Caco-2 (cell line): ENCODE measurements at regions of chr2 and their contacts with region 1.

Region 1: GRCh38 chr2:120879431-120880295 is 144.0 kb downstream of the GLI2 start:
- DNase-seq: peak in 1 of 2 experiments; percentile 46
- H3K4me3 ChIP-seq: no peak overlapping the region
- H3K4me3 Mint-ChIP-seq: peak overlapping the region; percentile 67
- H3K27ac Mint-ChIP-seq: no peak overlapping the region
- H3K4me1 ChIP-seq: no peaks in the 10 kb centered on the region
- H3K4me1 Mint-ChIP-seq: no peaks in the 10 kb centered on the region
- H3K27me3 ChIP-seq: no peaks in the 10 kb centered on the region
- H3K27me3 Mint-ChIP-seq: no peaks in the 10 kb centered on the region
- CTCF ChIP-seq: peak; percentile 23 to 42

Region 2: DNA sequence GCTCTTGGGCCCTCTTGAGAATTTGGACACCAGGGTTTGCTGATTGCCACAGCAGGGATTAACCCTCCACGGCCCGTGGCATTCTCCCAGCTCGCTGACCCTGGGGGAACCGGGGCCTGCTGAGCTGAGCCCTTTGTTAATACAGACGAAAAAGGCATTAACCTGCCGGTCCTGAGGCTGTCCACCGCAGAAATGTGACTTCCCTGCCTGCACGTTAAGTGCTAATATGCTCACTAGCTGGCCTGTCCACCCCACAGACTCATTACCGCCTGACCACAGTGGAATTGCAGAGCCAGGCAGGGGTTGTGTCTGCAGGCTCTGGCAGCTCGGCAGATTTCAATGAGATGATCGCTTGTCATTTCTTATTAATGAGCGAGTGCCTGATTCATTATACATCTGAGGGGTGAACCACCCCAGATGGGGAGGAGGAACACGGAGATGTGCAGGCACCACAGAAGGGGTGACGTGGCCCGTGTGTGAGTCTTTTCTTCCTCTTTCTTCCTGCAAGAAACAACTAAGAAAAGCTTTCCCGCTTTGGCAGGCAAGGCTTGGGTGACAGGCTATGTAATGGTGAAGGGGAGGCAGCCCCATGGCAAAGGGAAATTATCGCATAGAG is 18.0 kb before region 1 on chr2:
- CTCF ChIA-PET with region 1: no interaction called
- POLR2A ChIA-PET with region 1: no interaction called
- intact Hi-C with region 1: loop called (anchors 2 kb)
- DNase-seq: no peak
- H3K4me3 ChIP-seq: no peak overlapping the region
- H3K4me3 Mint-ChIP-seq: no peak overlapping the region
- H3K27ac Mint-ChIP-seq: no peak overlapping the region
- H3K4me1 ChIP-seq: peaks cover 9% of the 10 kb centered on the region
- H3K4me1 Mint-ChIP-seq: peaks cover 6% of the 10 kb centered on the region
- H3K27me3 ChIP-seq: no peaks in the 10 kb centered on the region
- H3K27me3 Mint-ChIP-seq: no peaks in the 10 kb centered on the region
- CTCF ChIP-seq: no peak

Region 3: GRCh38 chr2:120978359-120979050 is 98.8 kb after region 1 on chr2:
- CTCF ChIA-PET with region 1: no interaction called
- POLR2A ChIA-PET with region 1: no interaction called
- intact Hi-C with region 1: no loop called
- DNase-seq: peak; percentile 50 to 73
- H3K4me3 ChIP-seq: no peak overlapping the region
- H3K4me3 Mint-ChIP-seq: no peak overlapping the region
- H3K27ac Mint-ChIP-seq: no peak overlapping the region
- H3K4me1 ChIP-seq: peaks cover 35% of the 10 kb centered on the region
- H3K4me1 Mint-ChIP-seq: peaks cover 20% of the 10 kb centered on the region
- H3K27me3 ChIP-seq: no peaks in the 10 kb centered on the region
- H3K27me3 Mint-ChIP-seq: no peaks in the 10 kb centered on the region
- CTCF ChIP-seq: no peak